CD4-positive, alpha-beta memory T cell (primary cell): ENCODE measurements at regions of chr6 and their contacts with region 1.

Region 1: DNA sequence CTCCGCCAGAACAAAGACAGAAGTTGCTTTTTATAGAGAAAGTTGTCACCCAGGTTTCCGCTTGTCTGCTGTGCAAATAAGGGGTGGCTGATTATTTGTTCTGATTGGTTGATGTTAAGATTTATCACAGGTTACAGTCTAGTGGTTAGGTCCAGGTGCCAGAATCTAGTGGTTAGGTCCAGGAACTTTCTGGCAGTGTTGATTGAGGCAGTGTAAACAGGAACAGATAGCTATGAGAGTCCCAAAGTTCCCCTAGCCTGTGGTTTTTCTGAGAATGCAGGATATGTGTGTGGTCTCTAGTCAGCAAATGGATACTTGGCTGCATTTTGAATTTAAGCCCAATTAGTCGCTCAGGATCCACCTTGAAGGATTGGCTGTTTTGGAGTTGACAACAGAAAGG is 148.0 kb downstream of the TMEM200A start:
- DNase-seq: peak; percentile 69 to 87 (median 78)
- H3K4me3 ChIP-seq: no peak overlapping the region
- H3K4me3 Mint-ChIP-seq: peak overlapping the region; percentile 2 to 77 (median 64)
- H3K27ac ChIP-seq: peak overlapping the region; percentile 49
- H3K27ac Mint-ChIP-seq: peak overlapping the region; percentile 53 to 92 (median 77)
- H3K4me1 ChIP-seq: peaks cover 70% of the 10 kb centered on the region
- H3K4me1 Mint-ChIP-seq: peaks cover 52 to 75% (median 64%) of the 10 kb centered on the region in 4 donors
- H3K27me3 ChIP-seq: no peaks in the 10 kb centered on the region
- H3K27me3 Mint-ChIP-seq: no peaks in the 10 kb centered on the region

Region 2: DNA sequence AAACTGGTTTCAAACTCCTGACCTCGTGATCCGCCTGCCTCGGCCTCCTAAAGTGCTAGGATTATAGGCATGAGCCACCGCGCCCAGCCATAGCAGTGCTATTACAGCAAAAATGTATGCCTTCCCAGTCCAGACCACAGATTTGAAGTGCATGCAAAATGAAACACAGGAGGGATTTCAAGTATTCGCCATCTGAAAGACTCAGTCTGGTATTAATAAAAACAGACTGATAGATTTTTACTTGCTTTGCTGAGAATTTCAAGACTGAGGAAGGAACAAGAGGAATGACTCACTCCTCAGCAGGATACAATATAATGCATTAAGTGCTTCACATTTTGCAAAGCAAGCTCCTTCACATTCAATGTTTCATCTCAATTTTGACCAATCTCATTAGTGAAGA is 13.1 kb before region 1 on chr6:
- CTCF ChIA-PET with region 1: no interaction called
- POLR2A ChIA-PET with region 1: no interaction called
- intact Hi-C with region 1: no loop called
- DNase-seq: no peak
- H3K4me3 ChIP-seq: no peak overlapping the region
- H3K4me3 Mint-ChIP-seq: no peak overlapping the region
- H3K27ac ChIP-seq: no peak overlapping the region
- H3K27ac Mint-ChIP-seq: no peak overlapping the region
- H3K4me1 ChIP-seq: peaks cover 6% of the 10 kb centered on the region
- H3K4me1 Mint-ChIP-seq: peaks cover 3 to 15% (median 13%) of the 10 kb centered on the region in 4 donors
- H3K27me3 ChIP-seq: no peaks in the 10 kb centered on the region
- H3K27me3 Mint-ChIP-seq: no peaks in the 10 kb centered on the region

Region 3: DNA sequence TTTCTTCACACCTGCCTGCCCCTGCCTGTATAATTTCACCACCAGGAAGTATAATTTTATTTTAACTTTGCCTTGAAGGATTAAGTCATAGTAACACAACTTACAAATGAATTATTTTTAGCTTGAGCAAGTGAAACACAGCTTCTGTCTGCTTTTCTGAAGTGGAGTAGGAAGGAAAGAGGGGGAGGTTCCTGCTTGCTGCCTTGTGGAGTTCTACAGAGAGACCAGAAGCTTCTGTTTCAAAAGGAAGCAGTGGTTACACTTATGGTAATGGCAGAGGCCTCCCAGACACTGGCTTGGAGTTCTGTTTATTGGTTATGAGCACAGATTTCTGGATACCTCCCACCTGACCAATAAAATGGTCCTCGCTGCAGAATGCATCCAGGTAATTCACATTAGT is 11.6 kb after region 1 on chr6:
- CTCF ChIA-PET with region 1: interaction called, 4 read pairs
- POLR2A ChIA-PET with region 1: interaction called, 7 read pairs
- intact Hi-C with region 1: loop called (anchors 1 kb)
- DNase-seq: peak in 3 of 5 donors; percentile 11 to 16 (median 16)
- H3K4me3 ChIP-seq: no peak overlapping the region
- H3K4me3 Mint-ChIP-seq: peak overlapping the region in 6 of 8 donors; percentile 10 to 82 (median 38)
- H3K27ac ChIP-seq: peak overlapping the region; percentile 12
- H3K27ac Mint-ChIP-seq: peak overlapping the region in 6 of 7 donors; percentile 69 to 95 (median 89)
- H3K4me1 ChIP-seq: peaks cover 27% of the 10 kb centered on the region
- H3K4me1 Mint-ChIP-seq: peaks cover 30 to 54% (median 40%) of the 10 kb centered on the region in 4 donors
- H3K27me3 ChIP-seq: no peaks in the 10 kb centered on the region
- H3K27me3 Mint-ChIP-seq: no peaks in the 10 kb centered on the region

Region 4: DNA sequence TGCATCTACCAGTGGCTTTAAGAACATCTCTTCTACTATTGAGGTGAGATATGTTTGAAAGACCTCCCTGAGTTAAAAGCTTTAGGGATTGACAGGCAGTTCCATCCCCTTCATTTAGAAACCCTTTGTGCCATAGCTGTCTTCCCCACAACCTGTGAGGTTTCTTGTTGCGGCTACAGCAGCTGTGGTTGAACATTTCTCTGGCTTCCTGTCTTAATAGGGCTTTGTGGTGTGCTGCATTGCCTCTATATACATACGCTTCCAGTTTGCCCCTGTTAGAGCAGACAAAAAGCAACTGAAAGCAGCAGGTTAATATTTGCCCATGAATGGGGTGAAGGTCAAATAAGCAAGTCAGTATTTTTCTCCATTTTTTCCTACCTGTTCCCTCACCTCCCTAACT is 62.2 kb after region 1 on chr6:
- CTCF ChIA-PET with region 1: interaction called, 3 read pairs
- POLR2A ChIA-PET with region 1: interaction called, 8 read pairs
- intact Hi-C with region 1: loop called (anchors 1 kb)
- DNase-seq: peak; percentile 69 to 79 (median 71)
- H3K4me3 ChIP-seq: peak overlapping the region in 1 of 2 donors; percentile 36
- H3K4me3 Mint-ChIP-seq: peak overlapping the region; percentile 63 to 83 (median 78)
- H3K27ac ChIP-seq: no peak overlapping the region
- H3K27ac Mint-ChIP-seq: peak overlapping the region; percentile 56 to 88 (median 73)
- H3K4me1 ChIP-seq: peaks cover 58% of the 10 kb centered on the region
- H3K4me1 Mint-ChIP-seq: peaks cover 49 to 70% (median 59%) of the 10 kb centered on the region in 4 donors
- H3K27me3 ChIP-seq: no peaks in the 10 kb centered on the region
- H3K27me3 Mint-ChIP-seq: no peaks in the 10 kb centered on the region